ENCODE measurements at regions of chr18 and their contacts with region 1.

Region 1: GRCh38 chr18:8696749-8697211 is 8.6 kb upstream of the MTCL1 start:
- DNase-seq: peak; percentile 86
- ATAC-seq: peak; percentile 87

Region 2: DNA sequence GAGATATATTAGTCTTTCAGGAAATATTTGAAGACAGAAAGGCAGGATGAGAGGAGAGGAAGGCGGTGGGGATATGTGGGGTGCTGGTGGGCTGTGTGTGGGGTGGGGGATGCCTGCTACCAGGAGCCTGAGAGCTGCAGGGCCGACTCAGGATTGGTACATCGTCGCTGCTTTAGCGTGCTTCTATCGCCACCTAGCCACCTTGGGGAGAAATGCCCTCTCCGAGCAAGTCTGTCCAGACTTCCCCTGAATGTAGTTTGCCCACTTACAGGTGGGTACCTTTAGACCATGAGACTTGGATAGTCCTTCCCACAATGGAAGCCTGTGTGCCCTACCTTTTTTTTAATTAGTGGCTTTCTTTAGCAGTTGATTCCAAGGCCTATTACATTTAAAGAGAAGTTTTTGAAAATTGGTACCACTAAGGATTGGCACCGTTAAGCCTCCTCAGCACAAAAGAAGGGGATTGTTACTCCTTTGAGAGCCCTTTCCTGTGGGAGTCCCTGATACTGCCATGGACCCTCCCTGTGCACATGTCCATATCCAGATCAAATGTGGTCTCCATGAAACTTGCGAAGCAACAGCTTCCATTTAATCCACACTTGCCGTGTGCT is 291.6 kb after region 1 on chr18:
- intact Hi-C with region 1: loop called (anchors 2 kb)
- DNase-seq: peak; percentile 50
- ATAC-seq: peak; percentile 81

Region 3: GRCh38 chr18:9711361-9712129 is 1014.8 kb after region 1 on chr18:
- intact Hi-C with region 1: no loop called
- DNase-seq: no peak
- ATAC-seq: no peak